HCT116 (cell line): ENCODE measurements at regions of chr15 and their contacts with region 1.

Region 1: DNA sequence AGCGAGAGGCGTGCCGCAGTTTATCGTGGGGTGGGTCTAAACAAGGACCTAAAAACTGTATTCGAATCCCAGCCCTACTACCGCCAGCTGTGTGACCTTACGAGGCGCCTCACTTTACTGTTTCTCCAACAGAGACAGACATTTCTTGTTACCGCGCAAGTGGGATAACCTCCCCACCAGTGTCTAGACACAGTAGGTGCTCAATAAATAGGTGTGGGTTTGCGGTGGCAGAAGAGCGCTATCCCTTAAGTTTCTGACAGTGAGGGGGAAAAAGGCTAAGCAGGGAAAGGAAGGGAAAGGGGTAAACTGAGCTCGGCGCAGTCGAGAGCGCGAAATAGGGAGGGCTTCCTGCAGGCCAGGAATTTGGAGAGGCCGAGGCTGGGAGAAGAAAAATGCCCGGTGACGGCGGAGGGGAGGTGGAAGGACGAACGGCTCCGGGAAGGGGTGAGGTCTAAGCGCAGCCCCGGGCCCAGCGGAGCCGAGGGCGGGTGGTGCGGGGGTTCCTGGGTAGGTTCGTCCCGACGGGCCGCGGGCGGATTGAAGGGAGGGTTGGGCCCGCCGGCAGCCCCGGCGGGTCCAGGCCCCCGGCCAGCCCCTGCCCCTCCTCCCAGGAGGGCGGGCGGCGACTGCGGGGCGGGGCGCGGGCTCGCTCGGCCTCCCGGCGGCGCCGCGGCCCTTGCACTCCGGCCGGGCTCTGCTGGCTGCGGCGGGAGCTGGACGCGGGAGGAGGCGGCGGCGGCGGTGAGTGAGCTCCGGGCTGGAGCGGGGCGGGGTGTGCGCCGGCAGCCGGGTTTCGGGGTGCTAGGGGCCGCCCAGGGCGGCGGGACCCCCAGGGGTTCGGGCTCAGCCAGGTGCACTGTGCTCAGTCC is at the start of gene CGNL1:
- DNase-seq: no peak
- ATAC-seq: peak; percentile 86
- H3K4me3 ChIP-seq: peak within 1 kb of the TSS; percentile 40 to 55
- H3K27ac ChIP-seq: no peak within 1 kb of the TSS; the same call in 1 of the 2 replicates
- H3K4me1 ChIP-seq: peaks cover 5 to 12% of the 10 kb centered on the region in 2 experiments; a peak in 3 of 4 replicates
- H3K27me3 ChIP-seq: no peaks in the 10 kb centered on the region
- CTCF ChIP-seq: no peak
- POLR2A ChIP-seq: no peak
- RAD21 ChIP-seq: no peak
- total RNA-seq, gene CGNL1: 2.2 TPM

Region 2: GRCh38 chr15:57340682-57341259 is 35.3 kb before region 1 on chr15:
- CTCF ChIA-PET with region 1: interaction called, 9 read pairs
- POLR2A ChIA-PET with region 1: no interaction called
- RAD21 ChIA-PET with region 1: no interaction called
- intact Hi-C with region 1: loop called (anchors 1 kb)
- DNase-seq: peak; percentile 56
- ATAC-seq: peak; percentile 91
- H3K4me3 ChIP-seq: no peak overlapping the region
- H3K27ac ChIP-seq: no peak overlapping the region
- H3K4me1 ChIP-seq: no peaks in the 10 kb centered on the region
- H3K27me3 ChIP-seq: no peaks in the 10 kb centered on the region
- CTCF ChIP-seq: peak; percentile 75 to 92 (median 90)
- POLR2A ChIP-seq: no peak
- RAD21 ChIP-seq: peak; percentile 94

Region 3: GRCh38 chr15:57516327-57517031 is 140.4 kb after region 1 on chr15:
- CTCF ChIA-PET with region 1: no interaction called
- POLR2A ChIA-PET with region 1: no interaction called
- RAD21 ChIA-PET with region 1: no interaction called
- intact Hi-C with region 1: no loop called
- DNase-seq: no peak
- ATAC-seq: no peak
- H3K4me3 ChIP-seq: no peak overlapping the region
- H3K27ac ChIP-seq: no peak overlapping the region
- H3K4me1 ChIP-seq: peaks cover 0 to 8% of the 10 kb centered on the region in 2 experiments; a peak in 1 of 4 replicates
- H3K27me3 ChIP-seq: no peaks in the 10 kb centered on the region
- CTCF ChIP-seq: no peak
- POLR2A ChIP-seq: no peak
- RAD21 ChIP-seq: no peak

Region 4: DNA sequence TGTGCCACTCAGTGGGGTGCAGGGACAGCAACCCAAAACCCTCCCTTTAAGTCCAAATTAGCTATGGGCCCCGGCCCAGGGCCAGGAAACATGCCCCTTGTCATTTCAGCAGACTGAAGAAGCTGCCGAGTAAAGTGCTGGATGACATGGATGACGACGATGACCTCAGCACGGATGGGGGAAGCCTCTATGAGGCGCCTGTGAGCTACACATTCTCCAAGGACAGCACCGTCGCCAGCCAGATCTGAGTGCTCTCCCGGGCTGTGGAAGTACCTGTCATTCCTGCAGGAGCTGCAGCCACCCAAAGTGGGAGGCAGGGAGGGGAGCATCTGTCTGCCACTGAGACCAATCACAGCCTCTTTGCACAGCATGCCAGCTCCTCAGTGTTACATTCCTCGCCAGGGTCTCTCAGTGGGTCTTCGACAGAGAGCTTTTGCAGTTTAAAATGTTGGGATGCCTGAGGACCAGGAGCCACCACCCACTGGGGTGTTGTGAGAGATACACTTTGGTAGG is 171.2 kb after region 1 on chr15:
- CTCF ChIA-PET with region 1: no interaction called
- POLR2A ChIA-PET with region 1: no interaction called
- RAD21 ChIA-PET with region 1: no interaction called
- intact Hi-C with region 1: no loop called
- DNase-seq: no peak
- ATAC-seq: no peak
- H3K4me3 ChIP-seq: no peak overlapping the region
- H3K27ac ChIP-seq: no peak overlapping the region
- H3K4me1 ChIP-seq: peaks cover 22 to 35% of the 10 kb centered on the region in 2 experiments
- H3K27me3 ChIP-seq: no peaks in the 10 kb centered on the region
- CTCF ChIP-seq: no peak
- POLR2A ChIP-seq: no peak
- RAD21 ChIP-seq: no peak